Activated T-helper 2 cell treated with anti-CD3 and anti-CD28 coated beads, Interferon-gamma antibody, Interleukin-2, Interleukin-4, amounts not matched to agents 10 μg/mL and 5 μg/mL and 100 μg/mL, durations not matched to agents 14 hours and 24 hours and 36 hours (primary cell): ENCODE measurements at regions of chr18 and their contacts with region 1.

Region 1: DNA sequence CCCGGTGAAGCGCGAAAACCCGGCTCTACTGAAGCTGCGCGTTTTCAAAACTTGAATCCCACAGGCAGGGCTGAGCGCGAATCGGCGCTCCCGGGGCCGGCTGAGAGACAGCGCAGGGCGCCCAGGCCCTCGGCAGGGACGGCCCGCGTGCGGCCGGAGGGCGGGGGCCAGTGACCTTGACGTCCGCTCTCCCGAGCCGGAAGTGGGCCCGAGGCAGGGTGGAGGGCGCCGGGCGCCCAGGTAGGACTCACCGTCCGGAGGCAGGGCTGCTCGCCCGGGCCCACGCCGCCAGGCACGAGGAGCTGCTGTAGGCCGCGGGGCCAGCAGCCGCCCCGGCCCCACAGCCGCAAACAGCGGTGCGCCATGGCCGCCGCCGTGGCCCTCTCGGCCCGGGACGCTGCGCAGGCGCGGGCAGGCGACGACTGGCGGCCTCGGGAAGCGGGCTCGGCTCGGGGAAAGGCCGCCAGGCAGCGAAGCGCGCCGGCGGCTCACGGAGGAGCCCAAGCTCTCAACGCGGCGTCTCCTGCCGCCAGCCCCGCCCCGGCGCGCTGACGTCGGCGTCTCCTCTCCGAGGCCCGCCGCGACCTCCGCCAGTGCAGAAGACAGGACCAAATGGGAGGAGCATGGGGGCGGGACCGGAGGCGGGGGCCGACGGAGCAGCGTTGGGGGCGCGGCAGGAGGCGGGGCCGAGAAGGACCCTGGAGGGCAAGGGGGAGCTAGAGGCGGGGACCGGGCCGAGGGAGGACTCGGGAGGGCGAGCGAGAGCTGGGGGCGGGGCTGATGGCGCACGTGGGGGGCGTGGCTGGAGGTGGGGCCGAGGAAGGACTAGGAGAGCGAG is at the start of gene AFG3L2:
- DNase-seq: peak; percentile 100
- H3K4me3 Mint-ChIP-seq: peak within 1 kb of the TSS; percentile 91
- H3K27ac Mint-ChIP-seq: peak within 1 kb of the TSS; percentile 90
- H3K4me1 Mint-ChIP-seq: peaks cover 37% of the 10 kb centered on the region
- H3K27me3 Mint-ChIP-seq: peaks cover 9% of the 10 kb centered on the region
- total RNA-seq, gene AFG3L2: 61.8 and 65.1 TPM in 2 replicates

Region 2: DNA sequence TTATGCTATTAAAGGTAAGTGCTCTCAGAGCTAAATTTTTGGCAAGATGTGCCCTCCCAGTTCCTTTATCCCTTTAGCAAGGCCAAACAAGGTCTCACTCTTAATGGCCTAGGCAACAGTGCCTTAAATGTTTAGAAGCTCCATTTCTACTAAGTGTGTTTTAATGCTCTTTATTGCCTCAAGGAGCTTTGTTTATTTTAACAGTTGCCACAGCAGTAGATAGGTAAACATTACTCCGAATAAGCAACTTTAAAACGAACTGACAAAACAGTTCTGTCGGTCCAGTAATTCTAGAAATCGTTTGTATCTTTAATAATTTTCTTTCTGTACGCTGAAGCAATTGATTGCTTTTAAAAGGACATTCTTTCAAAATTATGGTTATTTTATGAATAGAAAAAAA is 1302.0 kb before region 1 on chr18:
- intact Hi-C with region 1: no loop called
- DNase-seq: no peak
- H3K4me3 Mint-ChIP-seq: no peak overlapping the region
- H3K27ac Mint-ChIP-seq: no peak overlapping the region
- H3K4me1 Mint-ChIP-seq: no peaks in the 10 kb centered on the region
- H3K27me3 Mint-ChIP-seq: no peaks in the 10 kb centered on the region

Region 3: DNA sequence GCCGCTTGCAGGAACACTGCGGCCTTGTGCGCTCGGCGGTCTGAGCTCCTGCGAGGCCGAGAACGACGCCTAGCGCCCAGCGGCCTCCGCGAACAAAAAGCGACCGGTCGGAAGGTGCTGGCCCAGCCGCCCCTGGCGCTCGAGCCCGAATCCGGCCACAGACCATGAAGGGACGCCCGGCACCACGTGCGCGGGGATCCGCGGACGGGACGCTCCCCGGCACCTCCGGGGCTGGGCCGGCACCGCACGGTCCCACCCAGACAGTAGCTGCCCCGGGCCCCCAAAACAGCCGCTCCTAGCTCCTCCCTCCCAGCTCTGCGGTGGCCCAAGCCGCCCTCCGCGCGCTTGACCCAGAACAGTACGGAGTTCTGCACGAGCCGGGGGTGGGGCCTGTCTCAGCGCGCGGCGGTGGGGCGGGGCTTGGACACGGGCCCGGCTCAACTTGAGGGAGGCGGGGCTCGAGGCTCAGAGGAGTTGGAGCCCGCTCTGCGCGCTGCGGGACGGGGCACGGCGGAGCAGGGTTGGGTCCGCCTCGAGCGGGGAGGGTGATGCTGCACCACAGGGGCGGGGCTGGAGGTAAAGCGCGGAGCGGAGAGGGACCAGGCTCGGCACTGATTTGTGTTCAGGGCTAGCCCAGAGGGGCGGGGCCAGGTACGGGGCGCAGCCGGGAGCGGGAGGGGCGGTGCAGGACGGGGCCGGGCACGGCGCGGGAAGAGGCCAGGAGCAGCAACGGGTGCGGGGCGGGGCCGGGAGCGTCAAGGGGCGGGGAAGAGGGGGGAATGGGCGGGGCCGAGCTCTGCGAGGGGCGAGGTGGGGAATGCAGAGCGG is 396.2 kb before region 1 on chr18:
- intact Hi-C with region 1: loop called (anchors 5 kb)
- DNase-seq: peak; percentile 98
- H3K4me3 Mint-ChIP-seq: peak overlapping the region; percentile 80
- H3K27ac Mint-ChIP-seq: peak overlapping the region; percentile 80
- H3K4me1 Mint-ChIP-seq: peaks cover 16% of the 10 kb centered on the region
- H3K27me3 Mint-ChIP-seq: peaks cover 9% of the 10 kb centered on the region

Region 4: GRCh38 chr18:12302391-12303147 is 74.4 kb before region 1 on chr18:
- intact Hi-C with region 1: no loop called
- DNase-seq: no peak
- H3K4me3 Mint-ChIP-seq: no peak overlapping the region
- H3K27ac Mint-ChIP-seq: no peak overlapping the region
- H3K4me1 Mint-ChIP-seq: peaks cover 10% of the 10 kb centered on the region
- H3K27me3 Mint-ChIP-seq: peaks cover 50% of the 10 kb centered on the region

Region 5: DNA sequence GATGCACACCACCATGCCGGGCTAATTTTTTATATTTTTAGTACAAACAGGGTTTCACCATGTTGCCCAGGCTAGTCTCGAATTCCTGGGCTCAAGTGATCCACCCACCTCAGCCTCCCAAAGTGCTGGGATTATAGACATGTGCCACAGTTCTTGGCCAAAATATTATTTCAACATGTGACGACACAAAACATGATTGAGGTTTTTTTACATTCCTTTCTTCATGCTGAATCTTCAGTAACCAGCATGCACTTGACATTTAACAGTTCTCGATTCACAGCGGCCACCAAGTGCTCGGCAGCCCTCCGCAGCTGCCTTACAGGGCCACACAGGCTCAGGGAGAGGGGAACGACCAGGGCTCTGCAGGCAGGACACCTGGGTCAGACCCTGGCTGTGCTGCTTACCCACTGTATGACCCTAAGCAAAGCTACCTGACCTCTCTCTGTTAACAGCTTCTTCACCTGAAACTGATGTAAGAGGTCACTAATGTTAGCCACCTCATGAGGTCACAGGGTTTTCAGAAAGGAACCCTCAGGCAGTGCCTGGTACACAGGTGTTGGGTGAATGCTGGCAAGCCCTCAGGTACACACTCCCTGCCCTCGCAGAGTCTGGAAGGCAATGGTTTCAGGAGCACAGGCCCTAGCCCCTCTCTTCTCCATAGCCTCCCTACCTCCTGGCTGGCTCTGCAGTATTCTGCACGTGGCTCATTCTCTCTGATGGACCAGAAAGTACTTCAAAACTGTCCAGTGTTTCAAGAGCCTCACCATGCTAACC is 43.2 kb before region 1 on chr18:
- intact Hi-C with region 1: loop called (anchors 5 kb)
- DNase-seq: no peak
- H3K4me3 Mint-ChIP-seq: no peak overlapping the region
- H3K27ac Mint-ChIP-seq: no peak overlapping the region
- H3K4me1 Mint-ChIP-seq: no peaks in the 10 kb centered on the region
- H3K27me3 Mint-ChIP-seq: no peaks in the 10 kb centered on the region

Region 6: DNA sequence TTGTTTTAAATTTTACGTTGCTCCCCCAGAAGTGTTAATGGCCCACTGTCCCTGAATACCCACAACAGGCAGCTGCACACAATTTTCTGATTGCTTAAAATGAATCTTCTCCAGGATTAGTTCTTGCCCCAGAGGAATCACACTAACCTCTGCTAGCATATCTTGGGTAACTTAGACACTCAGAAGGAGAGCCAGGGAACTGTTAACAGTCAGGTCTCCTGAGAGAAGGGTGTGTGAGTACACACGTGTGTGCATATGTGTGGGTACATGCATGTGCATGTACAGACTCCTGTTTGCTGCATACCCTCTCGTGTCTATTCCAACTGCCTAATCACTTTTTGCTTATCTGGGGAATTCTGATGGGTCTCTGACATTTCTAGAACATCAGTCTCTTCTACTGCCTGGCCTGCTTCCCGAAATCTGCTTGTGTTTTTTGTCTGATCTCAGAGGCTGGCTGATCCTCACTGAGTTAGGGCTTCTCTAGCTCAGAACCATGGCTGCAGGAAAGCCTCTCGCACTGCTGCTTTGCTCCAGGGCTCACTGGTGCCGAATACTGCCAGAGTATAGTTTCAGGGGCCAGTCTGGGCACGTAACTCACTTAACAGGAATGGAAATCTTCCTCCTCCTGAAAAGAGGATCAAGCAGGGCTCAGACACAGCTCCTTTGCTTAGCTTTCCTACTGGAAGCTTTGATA is 93.6 kb after region 1 on chr18:
- intact Hi-C with region 1: no loop called
- DNase-seq: no peak
- H3K4me3 Mint-ChIP-seq: no peak overlapping the region
- H3K27ac Mint-ChIP-seq: no peak overlapping the region
- H3K4me1 Mint-ChIP-seq: no peaks in the 10 kb centered on the region
- H3K27me3 Mint-ChIP-seq: no peaks in the 10 kb centered on the region

Region 7: GRCh38 chr18:12702221-12703095 is 325.5 kb after region 1 on chr18 and contains the starts of genes CEP76 and PSMG2:
- intact Hi-C with region 1: loop called (anchors 1 kb)
- DNase-seq: peak; percentile 81
- H3K4me3 Mint-ChIP-seq: peak within 1 kb of the TSS; percentile 100
- H3K27ac Mint-ChIP-seq: peak within 1 kb of the TSS; percentile 99
- H3K4me1 Mint-ChIP-seq: peaks cover 31% of the 10 kb centered on the region
- H3K27me3 Mint-ChIP-seq: no peaks in the 10 kb centered on the region
- total RNA-seq, gene CEP76: 14.5 and 17.6 TPM in 2 replicates
- total RNA-seq, gene PSMG2: 105 and 107 TPM in 2 replicates

Region 8: GRCh38 chr18:12947355-12948041 is 570.6 kb after region 1 on chr18 and contains the start of gene SEH1L:
- intact Hi-C with region 1: loop called (anchors 1 kb)
- DNase-seq: peak; percentile 96
- H3K4me3 Mint-ChIP-seq: peak within 1 kb of the TSS; percentile 98
- H3K27ac Mint-ChIP-seq: peak within 1 kb of the TSS; percentile 99
- H3K4me1 Mint-ChIP-seq: peaks cover 29% of the 10 kb centered on the region
- H3K27me3 Mint-ChIP-seq: no peaks in the 10 kb centered on the region
- total RNA-seq, gene SEH1L: 112 and 115 TPM in 2 replicates